ENCODE measurements at regions of chr18 and their contacts with region 1.

Region 1: GRCh38 chr18:67995769-67996168 is 479.2 kb upstream of the DSEL start:
- DNase-seq: no peak
- ATAC-seq: no peak
- H3K4me3 ChIP-seq: no peak overlapping the region
- H3K27ac ChIP-seq: no peak overlapping the region
- H3K4me1 ChIP-seq: no peaks in the 10 kb centered on the region
- H3K27me3 ChIP-seq: no peaks in the 10 kb centered on the region
- CTCF ChIP-seq: no peak

Region 2: GRCh38 chr18:67410075-67411070 is 585.4 kb before region 1 on chr18:
- CTCF ChIA-PET with region 1: no interaction called
- POLR2A ChIA-PET with region 1: no interaction called
- intact Hi-C with region 1: no loop called
- DNase-seq: no peak
- ATAC-seq: 0 out of 2 replicates have a peak, but pooled peaks have one; percentile 27
- H3K4me3 ChIP-seq: no peak overlapping the region
- H3K27ac ChIP-seq: no peak overlapping the region
- H3K4me1 ChIP-seq: peaks cover 4% of the 10 kb centered on the region; the same call in 1 of the 2 replicates
- H3K27me3 ChIP-seq: no peaks in the 10 kb centered on the region
- CTCF ChIP-seq: no peak

Region 3: GRCh38 chr18:67600181-67601172 is 395.3 kb before region 1 on chr18:
- CTCF ChIA-PET with region 1: no interaction called
- POLR2A ChIA-PET with region 1: no interaction called
- intact Hi-C with region 1: no loop called
- DNase-seq: peak; percentile 70
- ATAC-seq: peak; percentile 69
- H3K4me3 ChIP-seq: no peak overlapping the region
- H3K27ac ChIP-seq: no peak overlapping the region
- H3K4me1 ChIP-seq: peaks cover 33% of the 10 kb centered on the region
- H3K27me3 ChIP-seq: no peaks in the 10 kb centered on the region
- CTCF ChIP-seq: no peak

Region 4: DNA sequence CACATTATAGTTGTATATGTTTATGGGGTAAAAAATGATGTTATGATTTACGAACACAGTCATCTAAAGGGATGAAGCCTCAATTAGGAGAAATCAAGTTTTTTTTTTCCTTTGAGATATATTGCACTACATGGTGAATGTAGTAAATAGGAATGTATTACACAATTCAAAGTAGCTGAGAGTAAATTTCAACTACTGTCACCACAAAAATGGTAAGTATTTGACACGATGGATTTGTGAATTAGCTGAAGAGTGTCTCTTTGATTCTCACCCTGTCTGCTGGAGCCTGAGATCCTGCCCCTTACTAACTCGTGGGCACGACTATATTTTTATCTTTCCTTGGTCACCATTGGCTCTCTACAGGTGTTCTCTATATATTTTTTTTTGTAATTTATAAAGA is 61.2 kb after region 1 on chr18:
- CTCF ChIA-PET with region 1: no interaction called
- POLR2A ChIA-PET with region 1: no interaction called
- intact Hi-C with region 1: loop called (anchors 10 kb)
- DNase-seq: no peak
- ATAC-seq: no peak
- H3K4me3 ChIP-seq: no peak overlapping the region
- H3K27ac ChIP-seq: no peak overlapping the region
- H3K4me1 ChIP-seq: no peaks in the 10 kb centered on the region
- H3K27me3 ChIP-seq: no peaks in the 10 kb centered on the region
- CTCF ChIP-seq: no peak